ENCODE measurements at regions of chr15 and their contacts with region 1.

Region 1: DNA sequence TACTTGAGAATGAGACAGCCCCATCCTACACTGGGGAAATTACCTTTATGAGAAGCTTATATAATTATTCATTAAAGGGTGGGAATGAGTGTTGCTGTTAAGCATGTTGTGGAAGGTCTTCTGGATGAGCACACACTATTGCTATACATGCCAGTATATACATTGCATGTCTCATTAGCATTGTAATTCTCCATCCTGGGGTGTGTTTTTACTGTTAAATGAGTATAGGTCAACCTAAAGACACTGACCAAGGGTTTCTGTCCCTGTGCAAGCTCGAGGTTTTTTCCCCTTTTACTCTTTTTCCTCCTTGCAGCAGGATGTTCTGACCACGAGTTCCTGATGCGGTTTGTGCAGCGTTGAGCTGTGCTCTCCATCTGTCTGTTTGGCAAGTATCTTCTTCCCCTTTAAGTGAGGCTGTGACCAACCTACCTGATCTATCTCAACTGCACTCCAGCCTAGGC is 7.2 kb upstream of the IVD start:
- DNase-seq: peak; percentile 23
- H3K4me3 Mint-ChIP-seq: no peak overlapping the region
- H3K27ac Mint-ChIP-seq: peak overlapping the region; percentile 63
- H3K4me1 Mint-ChIP-seq: peaks cover 23% of the 10 kb centered on the region
- H3K27me3 Mint-ChIP-seq: no peaks in the 10 kb centered on the region

Region 2: GRCh38 chr15:40382580-40383456 is 15.6 kb before region 1 on chr15 and contains the start of gene KNSTRN:
- intact Hi-C with region 1: loop called (anchors 2 kb)
- DNase-seq: peak; percentile 89
- H3K4me3 Mint-ChIP-seq: peak within 1 kb of the TSS; percentile 94
- H3K27ac Mint-ChIP-seq: peak within 1 kb of the TSS; percentile 91
- H3K4me1 Mint-ChIP-seq: peaks cover 23% of the 10 kb centered on the region
- H3K27me3 Mint-ChIP-seq: peaks cover 7% of the 10 kb centered on the region
- total RNA-seq, gene KNSTRN: 48.1 and 49.9 TPM in 2 replicates

Measured in activated T-helper 2 cell treated with anti-CD3 and anti-CD28 coated beads, Interferon-gamma antibody, Interleukin-2, Interleukin-4, amounts not matched to agents 10 μg/mL and 5 μg/mL and 100 μg/mL, durations not matched to agents 14 hours and 24 hours and 36 hours (primary cell).